Posterior cingulate gyrus (tissue), 11 donors: ENCODE measurements at regions of chr11 and their contacts with region 1.

Region 1: DNA sequence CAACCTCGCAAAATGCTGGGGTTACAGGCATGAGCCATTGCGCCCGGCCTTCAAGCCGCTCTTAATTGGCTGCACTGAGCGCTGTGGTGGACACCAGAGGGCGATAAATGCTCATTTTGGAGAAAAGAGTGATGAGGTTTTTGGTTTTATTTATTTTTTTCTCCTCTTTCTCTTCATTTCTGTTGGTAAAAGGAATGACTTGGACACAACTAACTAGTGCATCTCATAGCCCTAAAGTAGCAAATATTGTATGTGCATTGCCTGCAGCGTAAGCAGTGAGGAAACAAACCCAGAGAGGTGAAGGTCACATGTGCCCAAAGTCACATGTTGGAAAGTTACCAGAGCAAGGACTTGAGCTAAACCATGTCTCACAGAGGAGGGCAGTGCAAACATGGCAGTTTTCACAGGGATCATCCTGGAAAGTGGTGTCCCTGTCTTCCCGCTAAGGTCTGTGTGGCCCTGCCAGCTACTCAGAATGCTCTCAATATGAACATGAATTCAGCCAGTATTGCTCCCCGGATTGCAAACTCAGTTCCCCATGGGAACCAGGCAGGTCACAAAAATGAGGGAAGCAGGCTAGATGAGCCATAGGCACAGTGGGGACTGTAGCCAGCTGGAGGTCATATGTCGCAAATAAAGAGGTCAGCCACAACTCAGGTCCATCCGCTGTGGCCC is 8.6 kb upstream of the CD82 start:
- DNase-seq: peak; percentile 40 to 93 (median 72)

Region 2: GRCh38 chr11:44505581-44506054 is 51.3 kb before region 1 on chr11:
- intact Hi-C with region 1: no loop called
- DNase-seq: peak in 1 of 10 donors; percentile 2

Region 3: DNA sequence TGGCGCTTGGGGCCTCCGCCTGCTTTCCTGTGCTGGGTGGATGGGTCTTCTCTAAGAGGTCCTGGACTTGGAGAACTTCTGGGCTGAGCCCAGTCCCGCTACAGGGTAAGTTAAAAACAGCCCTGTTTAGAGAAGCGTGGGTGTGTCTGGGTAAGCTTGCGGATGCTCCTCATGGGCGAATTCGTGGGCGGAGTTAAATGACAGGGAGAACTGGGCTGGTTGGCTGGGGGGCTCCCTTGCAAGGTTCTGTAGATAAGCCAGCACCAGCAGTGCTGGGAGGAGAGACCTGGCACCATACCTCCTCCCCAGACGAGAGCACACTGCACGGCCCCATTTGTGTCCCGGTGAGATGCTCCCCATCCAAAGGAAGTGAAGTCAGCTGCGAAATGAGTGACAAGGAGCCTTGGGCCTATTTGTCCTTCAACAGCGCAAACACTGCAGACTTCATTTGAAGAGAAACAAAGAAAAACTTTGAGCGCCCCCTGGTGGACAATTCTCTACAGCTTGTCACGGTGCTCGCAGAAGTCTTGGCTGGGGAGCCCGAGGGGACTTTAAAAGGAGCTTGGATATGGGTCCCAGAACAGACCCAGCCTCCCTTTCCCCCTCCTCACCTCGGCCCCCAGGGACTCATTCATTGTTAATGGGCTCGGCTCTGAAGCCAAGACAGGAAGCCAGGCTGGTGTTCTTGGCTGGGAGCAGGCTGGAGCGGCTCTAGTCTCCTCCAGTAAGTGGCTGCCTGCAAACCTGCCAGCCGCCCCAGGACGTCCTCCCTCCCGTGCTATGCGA is 354.4 kb after region 1 on chr11:
- intact Hi-C with region 1: loop called (anchors 2 kb)
- DNase-seq: peak; percentile 53 to 95 (median 88)